Activated CD4-positive, alpha-beta T cell treated with anti-CD3 and anti-CD28 coated beads for 36 hours (primary cell): ENCODE measurements at regions of chr5 and their contacts with region 1.

Region 1: DNA sequence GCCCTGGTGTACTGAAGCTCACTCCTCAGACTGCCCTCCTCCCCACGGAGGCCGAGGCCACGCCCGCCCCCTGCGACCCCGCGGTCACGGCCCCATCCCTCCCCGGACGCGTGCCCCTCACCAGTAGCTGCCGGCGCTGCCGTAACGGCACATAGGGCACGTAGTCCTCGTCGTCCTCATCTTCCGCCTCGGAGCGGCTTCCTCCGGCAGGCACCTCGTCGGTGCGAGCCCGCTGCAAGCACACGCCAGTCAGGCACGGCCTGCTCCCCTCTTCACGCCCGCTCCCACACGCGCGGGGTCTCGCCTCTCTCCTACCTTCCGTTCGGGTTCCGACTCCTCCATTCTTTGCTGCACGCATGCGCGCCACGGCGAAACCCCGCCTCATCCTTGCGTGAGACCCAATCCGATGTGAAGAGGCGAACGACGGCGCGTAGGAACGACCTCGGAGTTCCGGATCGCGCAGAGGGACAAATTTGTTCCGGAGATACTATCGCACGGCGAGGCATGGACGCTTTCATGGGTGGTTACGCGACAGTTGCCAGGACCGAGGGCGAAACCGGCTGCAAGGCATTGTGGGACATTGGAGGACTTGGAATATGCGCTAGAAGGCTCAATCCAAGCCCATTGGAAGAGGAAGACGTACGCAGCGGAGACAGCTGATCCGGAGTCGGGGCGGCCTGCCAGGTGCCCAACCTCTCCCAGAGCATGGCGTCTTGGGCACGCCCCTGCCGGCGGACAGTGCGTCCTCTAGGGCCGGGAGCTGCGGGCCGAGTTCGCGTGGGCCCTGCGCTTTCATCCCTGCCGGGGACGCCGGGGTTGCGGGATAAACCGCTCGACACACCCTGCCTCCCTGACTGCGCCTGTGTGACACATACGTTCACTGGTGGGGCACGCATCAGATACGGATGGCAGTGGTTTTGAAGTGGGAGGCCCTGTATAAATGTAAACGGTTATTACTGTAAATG is at the start of gene DDX41:
- DNase-seq: peak; percentile 98
- ATAC-seq: peak; percentile 91
- H3K4me3 Mint-ChIP-seq: peak within 1 kb of the TSS; percentile 98
- H3K27ac Mint-ChIP-seq: peak within 1 kb of the TSS; percentile 96
- H3K4me1 Mint-ChIP-seq: peaks cover 48% of the 10 kb centered on the region
- H3K27me3 Mint-ChIP-seq: no peaks in the 10 kb centered on the region
- total RNA-seq, gene DDX41: 192 to 197 TPM

Region 2: GRCh38 chr5:177473461-177474001 is 43.4 kb before region 1 on chr5 and contains the start of gene DBN1:
- CTCF ChIA-PET with region 1: no interaction called
- POLR2A ChIA-PET with region 1: no interaction called
- intact Hi-C with region 1: loop called in 1 of 2 experiments (anchors 1 kb)
- DNase-seq: peak; percentile 62
- ATAC-seq: peak; percentile 44
- H3K4me3 Mint-ChIP-seq: peak within 1 kb of the TSS; percentile 65
- H3K27ac Mint-ChIP-seq: peak within 1 kb of the TSS; percentile 70
- H3K4me1 Mint-ChIP-seq: peaks cover 35% of the 10 kb centered on the region
- H3K27me3 Mint-ChIP-seq: peaks cover 4% of the 10 kb centered on the region
- total RNA-seq, gene DBN1: 29.5 to 41.2 TPM

Region 3: DNA sequence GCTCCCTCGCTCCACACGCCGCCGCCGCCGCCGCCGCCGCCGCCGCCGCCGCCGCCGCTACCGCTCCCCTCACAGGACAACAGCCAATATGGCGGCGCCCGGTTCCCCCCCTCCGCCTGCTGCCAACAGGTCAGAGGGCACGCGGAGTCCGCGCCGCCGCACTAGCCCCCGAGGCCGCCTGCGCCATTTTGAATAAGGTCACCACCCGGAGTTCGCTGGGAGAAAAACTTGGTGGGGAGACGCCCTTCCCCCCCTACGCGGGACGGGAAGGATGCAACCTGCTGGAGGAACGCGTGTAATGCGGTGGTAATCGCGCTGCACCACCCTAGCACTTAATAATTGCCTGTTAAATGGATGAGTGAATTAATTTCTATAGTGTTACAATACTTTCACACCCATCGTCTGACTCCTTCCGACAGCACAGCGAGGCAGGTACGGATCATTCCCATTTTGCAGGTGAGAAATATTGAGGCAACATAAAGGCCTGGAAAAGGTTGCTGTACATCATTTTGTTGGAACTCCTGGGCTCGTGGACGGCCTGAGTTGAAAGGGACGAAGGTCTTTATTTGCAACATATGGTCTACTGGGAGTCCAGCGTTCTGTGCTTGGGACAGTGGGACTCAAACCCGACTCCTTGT is 37.7 kb after region 1 on chr5 and contains the start of gene FAM193B:
- CTCF ChIA-PET with region 1: no interaction called
- POLR2A ChIA-PET with region 1: no interaction called
- intact Hi-C with region 1: loop called (anchors 1 to 2 kb)
- DNase-seq: peak; percentile 98
- ATAC-seq: peak; percentile 99
- H3K4me3 Mint-ChIP-seq: peak within 1 kb of the TSS; percentile 80
- H3K27ac Mint-ChIP-seq: peak within 1 kb of the TSS; percentile 66
- H3K4me1 Mint-ChIP-seq: peaks cover 25% of the 10 kb centered on the region
- H3K27me3 Mint-ChIP-seq: no peaks in the 10 kb centered on the region
- total RNA-seq, gene FAM193B: 63.6 to 77.7 TPM

Region 4: GRCh38 chr5:179370490-179371120 is 1853.7 kb after region 1 on chr5:
- CTCF ChIA-PET with region 1: no interaction called
- POLR2A ChIA-PET with region 1: no interaction called
- intact Hi-C with region 1: no loop called
- DNase-seq: no peak
- ATAC-seq: no peak
- H3K4me3 Mint-ChIP-seq: no peak overlapping the region
- H3K27ac Mint-ChIP-seq: no peak overlapping the region
- H3K4me1 Mint-ChIP-seq: no peaks in the 10 kb centered on the region
- H3K27me3 Mint-ChIP-seq: no peaks in the 10 kb centered on the region